ENCODE measurements at regions of chr17 and their contacts with region 1.

Region 1: DNA sequence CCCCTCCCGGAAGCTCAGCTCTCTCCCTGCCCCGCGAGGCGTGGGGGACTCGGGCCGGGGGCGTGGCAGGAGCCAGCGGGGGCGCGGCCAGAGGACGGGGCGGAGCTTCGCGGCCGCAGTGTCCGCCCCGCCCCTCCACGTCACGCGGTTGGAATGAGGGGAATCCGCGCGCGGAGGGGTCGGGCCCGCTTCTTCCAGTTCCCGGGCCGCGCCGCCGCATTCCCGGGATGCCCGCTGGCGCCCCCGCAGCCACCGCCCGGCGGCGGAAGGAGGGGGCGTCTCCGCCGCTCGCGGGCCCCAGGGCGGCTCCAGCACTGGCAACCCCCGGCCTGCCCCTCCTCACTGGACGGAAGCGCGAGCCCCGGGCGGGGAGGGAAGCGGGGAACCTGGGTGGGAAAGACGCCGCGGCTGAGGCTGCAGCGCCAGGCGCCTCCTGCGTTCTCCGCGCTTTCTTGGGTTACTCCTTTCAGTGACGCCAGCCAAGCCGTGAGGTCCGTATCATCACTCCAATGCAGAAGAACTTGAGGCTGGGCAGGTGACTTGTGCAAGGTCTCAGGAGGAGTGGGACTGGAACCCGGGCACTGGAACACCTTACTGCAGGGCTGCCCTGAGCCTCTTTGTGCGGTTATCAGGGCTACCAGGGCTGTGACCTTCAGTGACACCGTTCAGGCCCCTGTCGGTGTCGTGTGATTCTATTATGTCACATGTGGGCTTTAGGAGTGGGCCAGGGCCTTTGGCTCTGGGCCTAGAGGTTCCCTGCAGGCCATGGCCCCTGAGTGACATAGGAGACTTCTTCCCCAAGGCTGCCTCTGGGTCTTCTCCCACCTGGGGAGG is 4.2 kb downstream of the MYO1C start:
- DNase-seq: peak; percentile 40 to 88 (median 68)
- ATAC-seq: peak; percentile 34
- H3K4me3 ChIP-seq: peak overlapping the region; percentile 61
- H3K4me3 Mint-ChIP-seq: peak overlapping the region; percentile 88
- H3K27ac ChIP-seq: peak overlapping the region; percentile 24 to 35
- H3K27ac Mint-ChIP-seq: peak overlapping the region; percentile 91
- H3K4me1 ChIP-seq: peaks cover 78% of the 10 kb centered on the region
- H3K4me1 Mint-ChIP-seq: peaks cover 47% of the 10 kb centered on the region
- H3K27me3 ChIP-seq: no peaks in the 10 kb centered on the region
- H3K27me3 Mint-ChIP-seq: no peaks in the 10 kb centered on the region
- CTCF ChIP-seq: no peak

Region 2: DNA sequence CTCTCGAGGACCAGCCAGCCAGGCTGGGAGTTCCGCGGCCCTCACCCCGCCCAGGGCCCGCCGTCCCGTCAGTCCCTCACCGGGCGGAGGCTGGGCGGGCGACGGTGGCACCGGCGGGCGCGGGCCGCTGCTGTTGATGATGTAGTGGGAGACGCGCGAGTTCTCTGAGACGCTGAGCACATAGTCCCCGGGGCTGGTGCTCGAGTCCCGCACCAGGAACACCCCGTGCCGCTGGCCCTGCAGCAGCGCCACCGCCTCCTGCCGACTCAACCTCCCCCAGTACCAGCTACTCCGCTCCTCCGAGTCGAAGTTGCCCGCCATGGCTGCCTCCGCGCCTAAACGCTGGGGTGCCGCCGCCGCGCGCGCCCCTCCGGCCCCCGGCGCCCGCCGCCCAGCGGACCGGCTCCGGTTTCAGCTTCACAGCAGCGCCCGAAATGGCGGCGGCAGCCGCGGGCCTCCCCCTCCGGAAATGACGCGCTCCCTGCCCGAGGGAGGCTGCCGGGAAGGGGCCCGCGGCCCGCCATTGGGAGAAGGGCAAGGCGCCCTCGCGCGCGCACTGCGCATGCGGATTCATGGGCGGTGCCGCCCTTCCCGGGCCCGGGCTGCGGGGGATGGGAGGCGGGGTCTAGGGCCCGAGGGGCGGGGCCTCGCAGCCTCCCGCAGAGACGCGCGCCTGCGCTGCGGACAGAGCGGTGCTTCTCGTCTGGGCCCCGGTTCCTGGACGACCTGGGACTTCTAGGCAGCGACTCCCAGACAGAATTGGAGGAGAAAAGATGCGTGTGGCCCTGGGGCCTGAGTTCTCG is 32.2 kb before region 1 on chr17 and contains the start of gene CRK:
- CTCF ChIA-PET with region 1: interaction called, 3 read pairs
- POLR2A ChIA-PET with region 1: interaction called, 10 read pairs
- intact Hi-C with region 1: loop called (anchors 1 to 5 kb)
- DNase-seq: peak; percentile 95 to 99 (median 99)
- ATAC-seq: peak; percentile 91
- H3K4me3 ChIP-seq: peak within 1 kb of the TSS; percentile 80
- H3K4me3 Mint-ChIP-seq: peak within 1 kb of the TSS; percentile 96
- H3K27ac ChIP-seq: peak within 1 kb of the TSS; percentile 88 to 91
- H3K27ac Mint-ChIP-seq: peak within 1 kb of the TSS; percentile 81
- H3K4me1 ChIP-seq: peaks cover 54% of the 10 kb centered on the region
- H3K4me1 Mint-ChIP-seq: peaks cover 51% of the 10 kb centered on the region
- H3K27me3 ChIP-seq: no peaks in the 10 kb centered on the region
- H3K27me3 Mint-ChIP-seq: no peaks in the 10 kb centered on the region
- CTCF ChIP-seq: no peak
- total RNA-seq, gene CRK: 13.6 to 14.5 TPM

Region 3: GRCh38 chr17:1561400-1562175 is 73.3 kb after region 1 on chr17:
- CTCF ChIA-PET with region 1: no interaction called
- POLR2A ChIA-PET with region 1: interaction called, 3 read pairs
- intact Hi-C with region 1: loop called in 1 of 2 experiments (anchors 2 kb)
- DNase-seq: peak in 11 of 14 experiments; percentile 14 to 68 (median 33)
- ATAC-seq: peak; percentile 40
- H3K4me3 ChIP-seq: peak overlapping the region; percentile 51
- H3K4me3 Mint-ChIP-seq: peak overlapping the region; percentile 88
- H3K27ac ChIP-seq: no peak overlapping the region
- H3K27ac Mint-ChIP-seq: peak overlapping the region; percentile 65
- H3K4me1 ChIP-seq: peaks cover 41% of the 10 kb centered on the region
- H3K4me1 Mint-ChIP-seq: peaks cover 37% of the 10 kb centered on the region
- H3K27me3 ChIP-seq: no peaks in the 10 kb centered on the region
- H3K27me3 Mint-ChIP-seq: no peaks in the 10 kb centered on the region
- CTCF ChIP-seq: peak; percentile 23

Region 4: DNA sequence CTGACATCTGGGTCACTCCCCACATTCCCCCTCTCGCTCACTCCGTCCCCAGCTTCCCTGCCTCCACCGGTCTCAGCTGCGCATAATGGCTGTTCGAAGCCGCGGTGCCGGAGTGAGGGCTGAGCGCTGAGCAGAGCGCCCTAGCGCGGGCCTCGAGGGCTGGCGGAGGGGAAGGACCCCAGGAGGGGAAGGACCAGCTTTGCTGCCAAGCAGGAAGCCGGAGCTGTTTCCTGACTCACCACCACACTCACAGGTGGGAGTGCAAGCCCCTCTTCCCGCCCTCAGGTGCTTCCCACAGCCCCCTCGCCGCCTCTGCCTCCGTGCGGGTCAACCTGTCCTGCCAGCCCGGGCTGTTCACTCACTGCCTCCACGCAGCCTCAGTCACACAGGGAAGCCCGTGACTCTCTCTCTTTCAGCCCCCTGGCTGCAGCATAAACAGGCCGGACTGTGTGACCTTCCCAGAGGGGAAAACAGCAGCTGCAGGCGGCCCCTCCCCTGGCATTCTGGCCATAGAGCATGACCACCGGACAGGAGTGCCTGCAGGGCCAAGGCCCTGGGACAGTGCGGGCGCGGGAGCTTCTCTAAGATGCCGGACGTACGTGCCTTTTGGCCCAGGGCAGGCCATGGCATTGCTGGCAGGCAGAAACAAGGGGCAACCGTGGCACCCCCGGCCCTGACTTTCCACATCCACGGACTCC is 116.7 kb after region 1 on chr17:
- CTCF ChIA-PET with region 1: no interaction called
- POLR2A ChIA-PET with region 1: no interaction called
- intact Hi-C with region 1: no loop called
- DNase-seq: no peak
- ATAC-seq: no peak
- H3K4me3 ChIP-seq: no peak overlapping the region
- H3K4me3 Mint-ChIP-seq: no peak overlapping the region
- H3K27ac ChIP-seq: no peak overlapping the region
- H3K27ac Mint-ChIP-seq: no peak overlapping the region
- H3K4me1 ChIP-seq: peaks cover 9% of the 10 kb centered on the region
- H3K4me1 Mint-ChIP-seq: no peaks in the 10 kb centered on the region
- H3K27me3 ChIP-seq: peaks cover 0 to 4% of the 10 kb centered on the region in 2 experiments
- H3K27me3 Mint-ChIP-seq: no peaks in the 10 kb centered on the region
- CTCF ChIP-seq: no peak

Measured in CD4-positive, alpha-beta T cell (primary cell).